CD4-positive, alpha-beta memory T cell (primary cell): ENCODE measurements at regions of chr5 and their contacts with region 1.

Region 1: DNA sequence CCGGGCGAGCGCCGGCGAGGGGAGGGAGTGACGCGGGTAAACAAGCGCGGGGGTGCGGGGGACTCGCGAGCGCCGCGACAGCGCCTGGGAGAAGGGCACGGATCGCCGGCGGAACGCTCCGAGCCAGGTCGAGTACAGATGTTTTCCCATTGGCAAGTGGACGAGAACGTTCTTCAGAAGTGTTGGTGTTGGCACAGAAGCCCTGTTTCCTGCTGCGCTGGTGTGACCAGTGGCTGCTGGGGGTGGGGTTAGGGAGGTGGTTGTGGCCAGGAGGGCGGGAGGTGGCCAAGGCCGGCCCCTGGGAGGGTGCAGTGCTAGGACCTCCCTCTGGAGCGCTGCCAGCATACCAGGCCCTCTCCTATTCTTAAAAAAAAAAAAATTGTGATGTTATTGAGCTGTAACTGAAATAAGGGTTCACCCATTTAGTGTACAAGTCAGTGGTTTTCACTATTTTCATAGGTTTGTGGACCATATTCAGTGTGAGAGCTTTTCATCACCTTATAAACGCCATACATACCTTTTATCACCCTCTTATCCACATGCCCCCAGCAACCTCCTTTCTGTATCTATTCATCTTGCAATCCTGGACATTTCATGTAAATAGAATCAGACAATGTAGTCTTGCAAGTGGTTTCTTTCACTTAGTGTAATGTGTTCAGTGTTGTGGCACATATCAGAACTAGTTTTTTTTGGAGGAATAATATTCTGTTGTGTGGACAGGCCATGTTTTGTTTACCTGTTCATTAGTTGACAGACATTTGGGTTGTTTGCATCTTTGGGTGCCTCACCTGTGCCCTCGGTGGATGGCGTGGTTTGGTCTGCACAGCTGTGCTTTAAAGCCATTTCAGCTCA is 1.1 kb downstream of the SQSTM1 start:
- DNase-seq: peak; percentile 89 to 92 (median 90)
- H3K4me3 ChIP-seq: peak overlapping the region; percentile 50 to 83
- H3K4me3 Mint-ChIP-seq: peak overlapping the region; percentile 93 to 98 (median 96)
- H3K27ac ChIP-seq: peak overlapping the region; percentile 99
- H3K27ac Mint-ChIP-seq: peak overlapping the region; percentile 96 to 99 (median 97)
- H3K4me1 ChIP-seq: peaks cover 52% of the 10 kb centered on the region
- H3K4me1 Mint-ChIP-seq: peaks cover 28 to 76% (median 46%) of the 10 kb centered on the region in 4 donors
- H3K27me3 ChIP-seq: no peaks in the 10 kb centered on the region
- H3K27me3 Mint-ChIP-seq: peaks cover 0 to 1% of the 10 kb centered on the region in 2 donors

Region 2: GRCh38 chr5:179509239-179509638 is 312.6 kb before region 1 on chr5:
- CTCF ChIA-PET with region 1: no interaction called
- POLR2A ChIA-PET with region 1: no interaction called
- intact Hi-C with region 1: no loop called
- DNase-seq: no peak
- H3K4me3 ChIP-seq: no peak overlapping the region
- H3K4me3 Mint-ChIP-seq: no peak overlapping the region
- H3K27ac ChIP-seq: no peak overlapping the region
- H3K27ac Mint-ChIP-seq: no peak overlapping the region
- H3K4me1 ChIP-seq: no peaks in the 10 kb centered on the region
- H3K4me1 Mint-ChIP-seq: peaks cover 0 to 8% (median 3%) of the 10 kb centered on the region in 4 donors
- H3K27me3 ChIP-seq: no peaks in the 10 kb centered on the region
- H3K27me3 Mint-ChIP-seq: peaks cover 1 to 3% of the 10 kb centered on the region in 2 donors

Region 3: GRCh38 chr5:179697993-179698934 is 123.5 kb before region 1 on chr5:
- CTCF ChIA-PET with region 1: no interaction called
- POLR2A ChIA-PET with region 1: interaction called, 3 read pairs
- intact Hi-C with region 1: loop called (anchors 2 kb)
- DNase-seq: peak; percentile 99
- H3K4me3 ChIP-seq: peak overlapping the region; percentile 76 to 93
- H3K4me3 Mint-ChIP-seq: peak overlapping the region; percentile 91 to 97 (median 95)
- H3K27ac ChIP-seq: peak overlapping the region; percentile 95
- H3K27ac Mint-ChIP-seq: peak overlapping the region; percentile 97 to 100 (median 99)
- H3K4me1 ChIP-seq: peaks cover 46% of the 10 kb centered on the region
- H3K4me1 Mint-ChIP-seq: peaks cover 24 to 63% (median 42%) of the 10 kb centered on the region in 4 donors
- H3K27me3 ChIP-seq: no peaks in the 10 kb centered on the region
- H3K27me3 Mint-ChIP-seq: no peaks in the 10 kb centered on the region

Region 4: DNA sequence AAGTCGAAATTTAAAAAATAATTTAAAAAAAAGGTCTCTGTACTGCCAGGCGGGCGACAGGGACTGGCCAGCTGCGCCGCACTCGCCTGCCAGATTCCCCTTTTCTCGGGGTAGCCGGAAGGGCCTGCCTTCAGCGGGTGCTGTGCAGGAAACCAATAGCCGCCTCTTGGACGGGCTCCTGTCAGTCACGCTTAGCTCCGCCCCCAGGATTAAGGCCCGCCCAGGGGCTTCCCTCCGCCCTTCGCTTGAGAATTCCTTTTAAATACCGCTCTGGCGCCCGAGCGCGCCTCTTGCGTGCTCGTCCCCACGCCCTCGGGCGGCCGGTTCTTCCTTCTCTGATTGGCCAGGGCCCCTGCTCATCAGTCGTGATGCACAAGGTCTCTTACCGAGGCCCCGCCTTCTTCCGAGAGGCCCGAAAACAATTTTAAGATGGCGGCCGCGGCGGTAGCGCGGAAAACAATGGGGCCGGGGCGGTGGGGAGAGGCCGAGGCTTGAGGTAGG is 89.3 kb before region 1 on chr5 and contains the start of gene MAML1:
- CTCF ChIA-PET with region 1: no interaction called
- POLR2A ChIA-PET with region 1: interaction called, 15 read pairs
- intact Hi-C with region 1: loop called (anchors 1 kb)
- DNase-seq: peak; percentile 99 to 100 (median 99)
- H3K4me3 ChIP-seq: peak within 1 kb of the TSS; percentile 53 to 62
- H3K4me3 Mint-ChIP-seq: peak within 1 kb of the TSS; percentile 92 to 97 (median 95)
- H3K27ac ChIP-seq: peak within 1 kb of the TSS; percentile 96
- H3K27ac Mint-ChIP-seq: peak within 1 kb of the TSS; percentile 92 to 99 (median 96)
- H3K4me1 ChIP-seq: peaks cover 44% of the 10 kb centered on the region
- H3K4me1 Mint-ChIP-seq: peaks cover 25 to 51% (median 37%) of the 10 kb centered on the region in 4 donors
- H3K27me3 ChIP-seq: no peaks in the 10 kb centered on the region
- H3K27me3 Mint-ChIP-seq: no peaks in the 10 kb centered on the region
- total RNA-seq, gene MAML1: 52.4 to 56.5 TPM

Region 5: GRCh38 chr5:179795863-179796833 is 25.7 kb before region 1 on chr5:
- CTCF ChIA-PET with region 1: interaction called, 4 read pairs
- POLR2A ChIA-PET with region 1: interaction called, 68 read pairs
- intact Hi-C with region 1: no loop called
- DNase-seq: peak; percentile 61 to 77 (median 68)
- H3K4me3 ChIP-seq: peak overlapping the region; percentile 23 to 69
- H3K4me3 Mint-ChIP-seq: peak overlapping the region; percentile 50 to 79 (median 64)
- H3K27ac ChIP-seq: peak overlapping the region; percentile 44
- H3K27ac Mint-ChIP-seq: peak overlapping the region in 6 of 7 donors; percentile 11 to 89 (median 57)
- H3K4me1 ChIP-seq: peaks cover 25% of the 10 kb centered on the region
- H3K4me1 Mint-ChIP-seq: peaks cover 11 to 51% (median 27%) of the 10 kb centered on the region in 4 donors
- H3K27me3 ChIP-seq: no peaks in the 10 kb centered on the region
- H3K27me3 Mint-ChIP-seq: no peaks in the 10 kb centered on the region

Region 6: GRCh38 chr5:179836225-179837019 is 14.6 kb after region 1 on chr5:
- CTCF ChIA-PET with region 1: interaction called, 4 read pairs
- POLR2A ChIA-PET with region 1: interaction called, 46 read pairs
- intact Hi-C with region 1: no loop called
- DNase-seq: peak; percentile 48 to 84 (median 64)
- H3K4me3 ChIP-seq: peak overlapping the region in 1 of 2 donors; percentile 30
- H3K4me3 Mint-ChIP-seq: peak overlapping the region in 7 of 8 donors; percentile 37 to 74 (median 65)
- H3K27ac ChIP-seq: peak overlapping the region; percentile 57
- H3K27ac Mint-ChIP-seq: peak overlapping the region; percentile 82 to 96 (median 93)
- H3K4me1 ChIP-seq: peaks cover 21% of the 10 kb centered on the region
- H3K4me1 Mint-ChIP-seq: peaks cover 14 to 26% (median 17%) of the 10 kb centered on the region in 4 donors
- H3K27me3 ChIP-seq: no peaks in the 10 kb centered on the region
- H3K27me3 Mint-ChIP-seq: no peaks in the 10 kb centered on the region

Region 7: DNA sequence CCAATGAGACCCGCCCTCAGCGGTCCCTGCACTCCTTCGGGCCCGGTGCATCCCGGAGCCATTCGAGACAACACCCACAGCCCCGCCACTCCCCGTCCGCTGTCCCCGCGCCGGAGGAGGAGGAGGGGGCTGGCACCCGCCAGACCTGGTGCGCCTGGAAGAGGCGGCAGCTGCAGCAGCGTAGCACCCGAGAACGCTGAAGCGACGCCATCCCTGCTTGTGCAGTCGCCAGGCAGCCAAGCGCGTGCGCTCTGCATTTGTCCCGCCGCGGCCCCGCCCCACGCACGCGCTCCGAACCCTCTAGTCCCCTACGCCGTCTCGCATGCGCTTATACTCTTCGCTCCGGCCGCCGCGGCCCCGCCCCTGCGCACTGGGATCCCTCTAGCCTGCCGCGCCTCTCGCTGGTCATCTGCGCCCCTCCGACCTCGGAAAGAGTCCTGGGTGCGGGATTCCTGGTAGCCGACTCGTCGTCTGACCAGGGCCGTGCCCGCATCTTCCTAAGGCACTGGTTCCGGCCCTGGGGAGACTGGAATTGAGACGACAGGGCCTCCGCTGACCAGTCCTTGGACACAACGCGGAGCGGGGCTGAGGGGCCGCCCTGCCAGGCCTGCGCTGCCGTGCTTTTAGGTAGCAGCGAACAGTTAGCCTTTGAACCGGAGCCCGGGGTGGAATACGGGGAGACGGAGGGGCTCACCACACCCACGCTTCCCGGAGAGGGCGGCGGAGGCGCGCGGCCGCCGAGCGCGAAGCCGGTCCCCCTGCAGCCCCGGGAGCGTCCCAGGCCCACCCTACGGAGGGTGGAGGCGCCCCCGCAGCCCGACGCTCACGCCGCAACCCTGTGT is 37.0 kb after region 1 on chr5 and contains the start of gene MRNIP:
- CTCF ChIA-PET with region 1: interaction called, 3 read pairs
- POLR2A ChIA-PET with region 1: interaction called, 24 read pairs
- intact Hi-C with region 1: loop called (anchors 1 kb)
- DNase-seq: peak; percentile 83 to 90 (median 86)
- H3K4me3 ChIP-seq: peak within 1 kb of the TSS; percentile 95 to 96
- H3K4me3 Mint-ChIP-seq: peak within 1 kb of the TSS; percentile 94 to 98 (median 97)
- H3K27ac ChIP-seq: peak within 1 kb of the TSS; percentile 66
- H3K27ac Mint-ChIP-seq: peak within 1 kb of the TSS; percentile 87 to 94 (median 92)
- H3K4me1 ChIP-seq: peaks cover 12% of the 10 kb centered on the region
- H3K4me1 Mint-ChIP-seq: peaks cover 7 to 30% (median 12%) of the 10 kb centered on the region in 4 donors
- H3K27me3 ChIP-seq: no peaks in the 10 kb centered on the region
- H3K27me3 Mint-ChIP-seq: no peaks in the 10 kb centered on the region
- total RNA-seq, gene MRNIP: 125 to 129 TPM

Region 8: DNA sequence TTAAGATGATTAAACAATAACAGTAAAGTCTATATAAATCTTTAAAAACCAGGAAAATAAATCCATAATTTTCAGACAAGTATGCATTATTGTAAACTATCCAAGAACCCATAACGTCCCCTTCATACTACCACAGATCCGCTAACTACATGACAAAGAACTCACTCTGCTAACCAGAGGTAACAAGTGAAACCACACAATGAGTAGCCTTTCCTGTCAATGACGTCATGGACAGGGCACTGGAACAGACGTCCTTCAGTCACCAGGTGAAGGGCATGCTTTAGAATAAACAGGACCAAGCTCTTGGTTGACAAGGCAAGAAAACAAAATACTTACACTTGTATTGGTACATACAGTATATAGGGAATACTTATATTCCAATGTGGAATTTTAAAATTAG is 204.5 kb after region 1 on chr5:
- CTCF ChIA-PET with region 1: no interaction called
- POLR2A ChIA-PET with region 1: no interaction called
- intact Hi-C with region 1: no loop called
- DNase-seq: no peak
- H3K4me3 ChIP-seq: no peak overlapping the region
- H3K4me3 Mint-ChIP-seq: no peak overlapping the region
- H3K27ac ChIP-seq: no peak overlapping the region
- H3K27ac Mint-ChIP-seq: no peak overlapping the region
- H3K4me1 ChIP-seq: no peaks in the 10 kb centered on the region
- H3K4me1 Mint-ChIP-seq: peaks cover 0 to 4% (median 2%) of the 10 kb centered on the region in 4 donors
- H3K27me3 ChIP-seq: no peaks in the 10 kb centered on the region
- H3K27me3 Mint-ChIP-seq: no peaks in the 10 kb centered on the region